ENCODE measurements at regions of chrX and their contacts with region 1.

Region 1: GRCh38 chrX:119606280-119607015 is at the start of gene NKRF:
- DNase-seq: peak; percentile 81 to 96 (median 86)
- ATAC-seq: peak; percentile 76
- H3K4me3 ChIP-seq: peak within 1 kb of the TSS; percentile 90
- H3K4me3 Mint-ChIP-seq: peak within 1 kb of the TSS; percentile 99
- H3K27ac ChIP-seq: peak within 1 kb of the TSS; percentile 82 to 90
- H3K27ac Mint-ChIP-seq: peak within 1 kb of the TSS; percentile 96
- H3K4me1 ChIP-seq: peaks cover 17% of the 10 kb centered on the region
- H3K4me1 Mint-ChIP-seq: peaks cover 48% of the 10 kb centered on the region
- H3K27me3 ChIP-seq: no peaks in the 10 kb centered on the region
- H3K27me3 Mint-ChIP-seq: no peaks in the 10 kb centered on the region
- CTCF ChIP-seq: no peak
- total RNA-seq, gene NKRF: 16.4 to 16.5 TPM

Region 2: GRCh38 chrX:119574394-119575266 is 31.8 kb before region 1 on chrX and contains the start of gene UBE2A:
- CTCF ChIA-PET with region 1: no interaction called
- POLR2A ChIA-PET with region 1: interaction called, 27 read pairs
- intact Hi-C with region 1: loop called (anchors 2 to 5 kb)
- DNase-seq: peak; percentile 81 to 94 (median 86)
- ATAC-seq: peak; percentile 90
- H3K4me3 ChIP-seq: peak within 1 kb of the TSS; percentile 75
- H3K4me3 Mint-ChIP-seq: peak within 1 kb of the TSS; percentile 94
- H3K27ac ChIP-seq: peak within 1 kb of the TSS; percentile 65 to 80
- H3K27ac Mint-ChIP-seq: peak within 1 kb of the TSS; percentile 97
- H3K4me1 ChIP-seq: peaks cover 14% of the 10 kb centered on the region
- H3K4me1 Mint-ChIP-seq: peaks cover 28% of the 10 kb centered on the region
- H3K27me3 ChIP-seq: no peaks in the 10 kb centered on the region
- H3K27me3 Mint-ChIP-seq: no peaks in the 10 kb centered on the region
- CTCF ChIP-seq: no peak
- total RNA-seq, gene UBE2A: 88.8 to 101 TPM

Region 3: GRCh38 chrX:119693040-119693995 is 86.9 kb after region 1 on chrX and contains the start of gene SEPTIN6:
- CTCF ChIA-PET with region 1: interaction called, 5 read pairs
- POLR2A ChIA-PET with region 1: interaction called, 14 read pairs
- intact Hi-C with region 1: loop called (anchors 5 to 10 kb)
- DNase-seq: peak; percentile 68 to 91 (median 83)
- ATAC-seq: peak; percentile 57
- H3K4me3 ChIP-seq: peak within 1 kb of the TSS; percentile 81
- H3K4me3 Mint-ChIP-seq: peak within 1 kb of the TSS; percentile 97
- H3K27ac ChIP-seq: peak within 1 kb of the TSS; percentile 64 to 85
- H3K27ac Mint-ChIP-seq: peak within 1 kb of the TSS; percentile 96
- H3K4me1 ChIP-seq: peaks cover 27% of the 10 kb centered on the region
- H3K4me1 Mint-ChIP-seq: peaks cover 22% of the 10 kb centered on the region
- H3K27me3 ChIP-seq: no peaks in the 10 kb centered on the region
- H3K27me3 Mint-ChIP-seq: no peaks in the 10 kb centered on the region
- CTCF ChIP-seq: no peak
- total RNA-seq, gene SEPTIN6: 132 to 134 TPM

Region 4: DNA sequence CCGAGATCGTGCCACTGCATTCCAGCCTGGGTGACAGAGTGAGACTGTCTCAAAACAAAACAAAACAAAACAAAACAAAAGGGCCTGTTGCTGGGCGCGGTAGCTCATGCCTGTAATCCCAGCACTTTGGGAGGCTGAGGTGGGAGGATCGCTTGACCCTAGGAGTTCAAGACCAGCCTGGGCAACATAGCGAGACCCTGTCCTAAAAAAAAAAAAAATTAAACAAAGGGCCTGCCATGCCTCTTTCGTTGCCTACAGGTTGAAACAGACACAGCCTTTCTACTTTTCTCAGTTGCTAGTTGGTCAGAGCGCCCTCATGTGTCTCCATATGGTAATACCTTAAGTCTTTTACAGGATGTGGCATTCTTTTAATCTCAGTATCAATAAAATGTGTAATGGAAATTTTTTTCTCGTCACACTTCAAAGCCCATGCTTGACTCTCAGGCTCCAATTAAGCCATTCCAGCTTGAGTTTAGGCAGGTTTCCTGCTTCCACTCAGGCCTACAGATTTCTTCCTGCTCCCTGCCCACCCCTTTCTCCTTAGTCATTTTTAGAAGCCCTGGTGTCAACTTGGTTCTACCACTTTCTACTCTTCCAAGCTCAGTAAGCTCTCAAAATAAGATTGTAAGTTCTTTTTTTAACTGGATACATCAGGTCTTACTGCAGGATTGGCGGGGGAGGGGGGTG is 147.3 kb after region 1 on chrX:
- CTCF ChIA-PET with region 1: interaction called, 5 read pairs
- POLR2A ChIA-PET with region 1: interaction called, 4 read pairs
- intact Hi-C with region 1: loop called in 1 of 2 experiments (anchors 10 kb)
- DNase-seq: peak in 11 of 14 experiments; percentile 14 to 89 (median 48)
- ATAC-seq: peak; percentile 65
- H3K4me3 ChIP-seq: no peak overlapping the region
- H3K4me3 Mint-ChIP-seq: peak overlapping the region; percentile 91
- H3K27ac ChIP-seq: peak overlapping the region in 1 of 2 donors; percentile 48
- H3K27ac Mint-ChIP-seq: peak overlapping the region; percentile 97
- H3K4me1 ChIP-seq: peaks cover 52% of the 10 kb centered on the region
- H3K4me1 Mint-ChIP-seq: peaks cover 44% of the 10 kb centered on the region
- H3K27me3 ChIP-seq: no peaks in the 10 kb centered on the region
- H3K27me3 Mint-ChIP-seq: no peaks in the 10 kb centered on the region
- CTCF ChIP-seq: peak; percentile 40

Region 5: GRCh38 chrX:119784747-119785446 is 178.4 kb after region 1 on chrX:
- CTCF ChIA-PET with region 1: no interaction called
- POLR2A ChIA-PET with region 1: no interaction called
- intact Hi-C with region 1: loop called in 1 of 2 experiments (anchors 5 kb)
- DNase-seq: peak; percentile 15 to 70 (median 36)
- ATAC-seq: peak; percentile 88
- H3K4me3 ChIP-seq: no peak overlapping the region
- H3K4me3 Mint-ChIP-seq: no peak overlapping the region
- H3K27ac ChIP-seq: no peak overlapping the region
- H3K27ac Mint-ChIP-seq: peak overlapping the region; percentile 15
- H3K4me1 ChIP-seq: peaks cover 28% of the 10 kb centered on the region
- H3K4me1 Mint-ChIP-seq: peaks cover 27% of the 10 kb centered on the region
- H3K27me3 ChIP-seq: no peaks in the 10 kb centered on the region
- H3K27me3 Mint-ChIP-seq: no peaks in the 10 kb centered on the region
- CTCF ChIP-seq: peak; percentile 41